Ascending aorta (tissue), 2 donors: ENCODE measurements at regions of chr15 and their contacts with region 1.

Region 1: GRCh38 chr15:62389885-62390790 is 225.1 kb upstream of the C2CD4B start:
- DNase-seq: peak in 1 of 2 donors; percentile 78
- H3K4me3 ChIP-seq: peak within 1 kb of the TSS; percentile 60 to 88
- H3K27ac ChIP-seq: peak within 1 kb of the TSS; percentile 83 to 93
- H3K4me1 ChIP-seq: peaks cover 7% of the 10 kb centered on the region in 2 donors
- H3K27me3 ChIP-seq: no peaks in the 10 kb centered on the region
- CTCF ChIP-seq: no peak

Region 2: GRCh38 chr15:62287066-62287857 is 102.9 kb before region 1 on chr15:
- intact Hi-C with region 1: no loop called
- DNase-seq: no peak
- H3K4me3 ChIP-seq: no peak overlapping the region
- H3K27ac ChIP-seq: no peak overlapping the region
- H3K4me1 ChIP-seq: no peaks in the 10 kb centered on the region
- H3K27me3 ChIP-seq: no peaks in the 10 kb centered on the region
- CTCF ChIP-seq: no peak

Region 3: GRCh38 chr15:62455441-62455921 is 65.3 kb after region 1 on chr15:
- intact Hi-C with region 1: loop called (anchors 5 kb)
- DNase-seq: no peak
- H3K4me3 ChIP-seq: no peak overlapping the region
- H3K27ac ChIP-seq: peak overlapping the region; percentile 87 to 92
- H3K4me1 ChIP-seq: peaks cover 10 to 56% of the 10 kb centered on the region in 2 donors
- H3K27me3 ChIP-seq: no peaks in the 10 kb centered on the region
- CTCF ChIP-seq: no peak

Region 4: GRCh38 chr15:62591842-62592838 is 202.0 kb after region 1 on chr15:
- intact Hi-C with region 1: loop called (anchors 5 kb)
- DNase-seq: no peak
- H3K4me3 ChIP-seq: peak overlapping the region in 1 of 2 donors; percentile 16
- H3K27ac ChIP-seq: peak overlapping the region; percentile 76 to 79
- H3K4me1 ChIP-seq: peaks cover 5 to 43% of the 10 kb centered on the region in 2 donors
- H3K27me3 ChIP-seq: no peaks in the 10 kb centered on the region
- CTCF ChIP-seq: no peak

Region 5: GRCh38 chr15:62742409-62743171 is 352.5 kb after region 1 on chr15:
- intact Hi-C with region 1: loop called (anchors 1 kb)
- DNase-seq: peak in 1 of 2 donors; percentile 88
- H3K4me3 ChIP-seq: no peak overlapping the region
- H3K27ac ChIP-seq: peak overlapping the region; percentile 60 to 72
- H3K4me1 ChIP-seq: peaks cover 3 to 11% of the 10 kb centered on the region in 2 donors
- H3K27me3 ChIP-seq: no peaks in the 10 kb centered on the region
- CTCF ChIP-seq: peak; percentile 50 to 84 (median 79)